GM10248 (cell line): ENCODE measurements at regions of chr9 and their contacts with region 1.

Region 1: GRCh38 chr9:19018201-19018600 is 14.8 kb downstream of the SAXO1 start:
- DNase-seq: no peak
- CTCF ChIP-seq: no peak

Region 2: DNA sequence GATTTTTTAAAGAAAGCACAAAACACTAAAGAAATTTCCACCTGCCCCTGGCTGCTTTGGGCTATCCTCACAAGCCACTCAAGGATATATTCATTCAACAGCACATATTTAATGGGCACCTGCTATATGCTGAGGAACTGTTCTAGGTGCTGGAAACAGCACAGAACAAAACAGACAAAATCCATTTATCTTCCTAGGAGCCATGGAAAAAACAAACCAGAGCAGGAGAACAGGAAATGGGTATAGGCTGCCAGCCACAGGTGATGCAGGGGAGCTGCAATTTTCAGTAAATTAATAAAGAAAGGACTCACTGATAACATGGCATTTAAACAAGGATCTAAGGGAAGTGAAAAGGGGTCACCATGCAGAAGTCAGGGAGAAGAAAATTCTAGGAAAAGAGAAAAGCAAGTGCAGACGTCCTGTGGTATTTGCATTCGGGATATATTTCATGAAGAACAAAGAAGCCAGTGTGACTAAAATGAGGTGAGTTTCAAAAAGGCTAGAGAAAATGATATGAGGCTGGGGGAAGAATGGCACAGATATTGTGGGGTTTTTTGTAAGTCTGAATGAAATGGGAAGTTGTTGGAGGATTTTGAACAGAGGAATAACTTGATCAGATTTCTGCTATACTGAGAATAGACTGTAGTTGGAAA is 392.0 kb before region 1 on chr9:
- CTCF ChIA-PET with region 1: no interaction called
- POLR2A ChIA-PET with region 1: no interaction called
- DNase-seq: no peak
- CTCF ChIP-seq: no peak

Region 3: GRCh38 chr9:19028835-19029451 is 10.7 kb after region 1 on chr9:
- CTCF ChIA-PET with region 1: interaction called, 38 read pairs
- POLR2A ChIA-PET with region 1: no interaction called
- DNase-seq: peak; percentile 76
- CTCF ChIP-seq: peak; percentile 63